HepG2 (cell line): ENCODE measurements at regions of chr3 and their contacts with region 1.

Region 1: GRCh38 chr3:174098671-174099070 is 701.1 kb downstream of the NLGN1 start:
- DNase-seq: no peak
- ATAC-seq: no peak
- H3K4me3 ChIP-seq: no peak overlapping the region
- H3K27ac ChIP-seq: no peak overlapping the region
- H3K4me1 ChIP-seq: no peaks in the 10 kb centered on the region
- H3K27me3 ChIP-seq: no peaks in the 10 kb centered on the region
- CTCF ChIP-seq: no peak
- EP300 ChIP-seq: no peak
- POLR2A ChIP-seq: no peak
- RAD21 ChIP-seq: no peak

Region 2: GRCh38 chr3:172974969-172975368 is 1123.7 kb before region 1 on chr3:
- CTCF ChIA-PET with region 1: no interaction called
- POLR2A ChIA-PET with region 1: no interaction called
- in situ Hi-C with region 1: no loop called
- intact Hi-C with region 1: loop called (anchors 5 kb)
- DNase-seq: no peak
- ATAC-seq: no peak
- H3K4me3 ChIP-seq: no peak overlapping the region
- H3K27ac ChIP-seq: no peak overlapping the region
- H3K4me1 ChIP-seq: no peaks in the 10 kb centered on the region
- H3K27me3 ChIP-seq: no peaks in the 10 kb centered on the region; a peak in 1 of 5 replicates
- CTCF ChIP-seq: no peak
- EP300 ChIP-seq: no peak
- POLR2A ChIP-seq: no peak
- RAD21 ChIP-seq: no peak